ENCODE measurements at regions of chr7 and their contacts with region 1.

Region 1: DNA sequence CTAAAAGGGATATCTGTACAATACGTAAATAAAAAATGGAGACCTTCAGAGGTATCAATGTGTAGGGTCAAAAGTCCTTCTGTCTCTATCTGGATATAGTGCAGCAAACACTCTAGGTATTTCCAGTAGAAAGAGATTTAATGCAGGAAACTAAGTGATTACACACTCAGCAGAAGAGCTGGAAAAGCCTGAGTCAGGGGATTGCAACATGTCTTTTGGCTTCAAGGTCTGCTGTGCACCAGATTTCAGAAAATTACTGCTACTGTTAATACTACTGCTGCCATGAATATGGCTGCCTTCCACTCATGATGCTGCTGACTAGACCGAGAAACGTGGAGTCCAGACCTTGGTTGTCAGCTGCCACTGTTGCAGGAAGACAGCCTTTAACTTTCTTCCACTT is 94.9 kb upstream of the DLX6 start:
- DNase-seq: no peak
- H3K4me3 ChIP-seq: no peak overlapping the region
- H3K27ac ChIP-seq: no peak overlapping the region
- H3K4me1 ChIP-seq: no peaks in the 10 kb centered on the region
- H3K27me3 ChIP-seq: no peaks in the 10 kb centered on the region
- CTCF ChIP-seq: no peak

Region 2: GRCh38 chr7:95905165-95905564 is 1005.3 kb before region 1 on chr7:
- CTCF ChIA-PET with region 1: no interaction called
- POLR2A ChIA-PET with region 1: no interaction called
- intact Hi-C with region 1: no loop called
- DNase-seq: no peak
- H3K4me3 ChIP-seq: no peak overlapping the region
- H3K27ac ChIP-seq: no peak overlapping the region
- H3K4me1 ChIP-seq: no peaks in the 10 kb centered on the region
- H3K27me3 ChIP-seq: 0 out of 2 replicates have a peak, but pooled peaks cover 2% of the 10 kb centered on the region
- CTCF ChIP-seq: no peak

Region 3: DNA sequence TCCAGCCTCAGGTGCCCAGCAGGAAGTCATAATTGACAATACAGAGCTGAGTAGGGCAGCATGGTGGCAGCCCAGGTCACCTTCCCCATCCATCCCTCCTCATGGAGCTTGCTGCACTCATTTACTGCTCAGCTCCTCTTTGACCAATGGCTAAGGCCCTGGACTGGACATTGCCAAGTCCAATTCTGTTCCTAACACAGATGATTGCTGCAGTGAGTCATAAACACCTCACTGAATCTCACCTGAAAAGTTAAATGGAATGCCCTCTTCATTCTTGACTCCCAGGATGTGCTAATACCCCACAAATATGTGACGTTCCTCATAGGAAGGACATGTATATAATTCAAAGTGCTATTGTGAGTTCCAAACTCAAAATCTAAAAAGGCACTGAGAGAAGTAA is 21.3 kb after region 1 on chr7:
- CTCF ChIA-PET with region 1: no interaction called
- POLR2A ChIA-PET with region 1: no interaction called
- intact Hi-C with region 1: loop called (anchors 1 kb)
- DNase-seq: no peak
- H3K4me3 ChIP-seq: no peak overlapping the region
- H3K27ac ChIP-seq: no peak overlapping the region
- H3K4me1 ChIP-seq: no peaks in the 10 kb centered on the region
- H3K27me3 ChIP-seq: no peaks in the 10 kb centered on the region
- CTCF ChIP-seq: no peak